A673 (cell line): ENCODE measurements at regions of chr4 and their contacts with region 1.

Region 1: GRCh38 chr4:15001869-15002658 is at the start of gene CPEB2:
- DNase-seq: peak; percentile 98
- H3K4me3 ChIP-seq: peak within 1 kb of the TSS; percentile 88
- H3K27ac ChIP-seq: peak within 1 kb of the TSS; percentile 100
- H3K4me1 ChIP-seq: peaks cover 17% of the 10 kb centered on the region
- H3K27me3 ChIP-seq: no peaks in the 10 kb centered on the region
- CTCF ChIP-seq: no peak
- total RNA-seq, gene CPEB2: 75.5 and 80.1 TPM in 2 replicates

Region 2: DNA sequence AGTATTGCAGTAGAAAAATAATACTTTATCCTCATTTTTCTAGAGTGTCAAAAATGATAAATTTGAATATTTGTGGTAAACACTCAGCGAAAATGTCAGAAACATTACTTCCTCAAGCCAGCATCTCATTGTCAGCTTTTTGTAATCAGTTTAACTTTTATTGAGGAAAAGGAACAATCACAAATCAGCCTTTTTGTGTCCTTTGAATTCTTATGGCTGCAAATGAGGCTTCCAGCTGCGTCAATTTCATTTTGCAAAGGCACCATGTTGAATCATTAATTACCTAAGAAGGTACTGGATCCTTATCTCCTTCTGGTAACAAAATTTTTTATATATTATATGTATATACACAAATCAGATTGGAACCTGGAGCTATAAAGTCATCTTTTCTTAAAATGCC is 442.4 kb before region 1 on chr4:
- CTCF ChIA-PET with region 1: no interaction called
- POLR2A ChIA-PET with region 1: no interaction called
- intact Hi-C with region 1: loop called (anchors 2 kb)
- DNase-seq: peak; percentile 93
- H3K4me3 ChIP-seq: no peak overlapping the region
- H3K27ac ChIP-seq: peak overlapping the region; percentile 92
- H3K4me1 ChIP-seq: peaks cover 42% of the 10 kb centered on the region
- H3K27me3 ChIP-seq: no peaks in the 10 kb centered on the region
- CTCF ChIP-seq: no peak

Region 3: DNA sequence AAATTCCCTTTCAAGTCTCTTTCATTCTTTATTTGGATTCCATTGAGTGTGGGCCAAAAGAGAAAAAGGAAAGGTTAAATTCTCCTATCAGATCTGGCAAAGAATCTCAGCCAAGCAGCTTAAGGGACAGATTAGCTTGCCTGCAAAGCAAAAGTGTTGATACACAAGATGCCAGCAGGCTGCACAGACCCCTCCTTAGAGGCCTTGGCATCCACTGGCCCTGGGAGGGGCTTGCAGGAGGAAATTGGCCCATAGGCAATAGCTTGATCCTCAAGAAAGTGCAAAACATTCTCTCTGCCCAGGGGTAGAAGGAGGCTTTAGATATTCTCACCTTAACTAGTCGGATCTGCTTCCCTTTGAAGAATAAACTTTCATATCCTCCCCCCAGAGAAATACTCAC is 300.2 kb before region 1 on chr4:
- CTCF ChIA-PET with region 1: no interaction called
- POLR2A ChIA-PET with region 1: interaction called, 18 read pairs
- intact Hi-C with region 1: no loop called
- DNase-seq: peak; percentile 12
- H3K4me3 ChIP-seq: no peak overlapping the region
- H3K27ac ChIP-seq: no peak overlapping the region
- H3K4me1 ChIP-seq: no peaks in the 10 kb centered on the region
- H3K27me3 ChIP-seq: no peaks in the 10 kb centered on the region
- CTCF ChIP-seq: no peak

Region 4: DNA sequence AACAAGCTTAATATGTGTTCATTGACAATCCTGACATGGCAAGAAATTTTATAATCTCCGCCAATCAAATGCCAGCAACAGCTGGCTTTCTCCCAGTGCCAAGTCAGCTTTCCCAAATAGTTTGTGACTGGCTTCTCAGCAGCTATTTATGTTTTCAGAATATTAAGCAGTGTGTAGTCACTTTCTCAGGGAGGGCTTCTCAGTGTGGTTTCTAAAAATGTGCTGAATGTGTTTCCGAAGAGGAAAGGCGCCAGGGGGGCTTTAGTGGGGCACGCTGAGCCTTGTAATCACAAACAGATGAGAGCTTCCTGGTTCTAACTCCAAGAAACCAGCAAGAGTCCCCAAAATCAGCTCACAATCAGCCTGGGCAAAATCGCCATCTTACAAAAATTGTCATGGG is 258.5 kb before region 1 on chr4:
- CTCF ChIA-PET with region 1: no interaction called
- POLR2A ChIA-PET with region 1: interaction called, 3 read pairs
- intact Hi-C with region 1: loop called (anchors 2 kb)
- DNase-seq: peak; percentile 98
- H3K4me3 ChIP-seq: no peak overlapping the region
- H3K27ac ChIP-seq: peak overlapping the region; percentile 99
- H3K4me1 ChIP-seq: peaks cover 44% of the 10 kb centered on the region
- H3K27me3 ChIP-seq: no peaks in the 10 kb centered on the region
- CTCF ChIP-seq: no peak